ENCODE measurements at regions of chr6 and their contacts with region 1.

Region 1: DNA sequence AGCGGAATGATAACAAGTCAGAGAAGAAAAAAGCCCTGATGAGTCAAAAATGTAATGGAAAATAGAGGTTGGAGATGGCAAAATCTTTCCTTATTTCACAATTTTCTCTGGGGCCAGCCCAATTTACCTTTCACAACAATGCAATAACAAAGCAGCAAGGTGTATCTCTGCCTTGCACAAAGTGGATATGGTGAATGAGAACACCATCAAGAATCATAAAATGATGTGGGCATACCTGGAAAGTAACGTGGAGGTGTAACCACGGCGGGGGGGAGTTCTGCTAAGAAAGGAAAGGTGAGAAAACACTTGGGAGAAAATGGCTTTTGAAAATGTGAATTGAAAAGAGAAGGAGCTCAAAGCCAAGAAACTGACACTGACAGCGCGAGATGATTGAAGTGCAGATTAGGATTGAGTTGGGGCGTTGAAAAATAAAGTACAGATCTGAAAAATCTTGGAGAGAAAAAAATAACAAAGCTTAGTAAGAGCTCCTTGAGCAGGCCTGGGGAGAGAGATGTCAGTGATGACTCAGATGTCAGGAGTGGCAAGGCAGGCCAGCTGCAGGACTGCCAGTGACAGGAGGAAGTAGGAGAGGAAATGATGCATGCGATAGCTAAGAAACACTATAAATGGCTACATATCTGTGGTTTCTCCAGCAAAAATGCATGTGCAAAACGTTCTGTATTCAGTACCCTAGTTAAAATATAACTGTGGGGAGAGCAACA is 26.2 kb downstream of the ARHGAP18 start:
- DNase-seq: peak; percentile 96 to 99 (median 96)
- H3K4me3 ChIP-seq: peak overlapping the region in 3 of 7 experiments; percentile 6 to 43 (median 23)
- H3K27ac ChIP-seq: peak overlapping the region; percentile 81 to 86
- H3K4me1 ChIP-seq: peaks cover 32 to 85% (median 45%) of the 10 kb centered on the region in 4 experiments
- H3K27me3 ChIP-seq: no peaks in the 10 kb centered on the region

Region 2: GRCh38 chr6:129672881-129673643 is 10.7 kb before region 1 on chr6:
- CTCF ChIA-PET with region 1: interaction called, 12 read pairs
- POLR2A ChIA-PET with region 1: interaction called, 5 read pairs
- DNase-seq: peak in 2 of 3 donors; percentile 72 to 81
- H3K4me3 ChIP-seq: no peak overlapping the region
- H3K27ac ChIP-seq: no peak overlapping the region
- H3K4me1 ChIP-seq: peaks cover 0 to 23% (median 3%) of the 10 kb centered on the region in 4 experiments
- H3K27me3 ChIP-seq: no peaks in the 10 kb centered on the region